ENCODE measurements at regions of chrX and their contacts with region 1.

Region 1: DNA sequence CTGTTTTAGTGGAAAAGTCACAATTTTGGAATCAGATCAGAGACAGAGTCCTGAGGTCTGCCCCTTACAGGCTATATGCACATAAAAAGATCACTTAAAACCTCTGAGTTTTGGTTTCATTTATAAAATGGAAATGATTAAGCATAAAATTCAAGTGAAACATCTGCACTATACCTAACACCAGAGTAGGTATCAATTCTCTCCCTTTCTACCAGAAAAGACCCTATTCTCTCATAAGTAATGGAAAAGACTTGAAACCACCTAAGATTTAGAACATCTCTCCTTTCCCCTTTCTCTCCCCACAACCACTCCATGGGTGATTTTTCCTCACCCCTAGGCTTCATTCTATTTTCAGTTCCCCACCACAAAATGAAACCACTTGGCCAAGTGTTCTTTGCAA is 907 bp downstream of the LHFPL1 start:
- DNase-seq: peak in 1 of 9 experiments; percentile 14
- ATAC-seq: peak; percentile 27
- H3K4me3 ChIP-seq: no peak overlapping the region
- H3K4me3 Mint-ChIP-seq: peak overlapping the region; percentile 85
- H3K27ac ChIP-seq: peak overlapping the region; percentile 47 to 73
- H3K27ac Mint-ChIP-seq: peak overlapping the region; percentile 88
- H3K4me1 ChIP-seq: peaks cover 27% of the 10 kb centered on the region
- H3K4me1 Mint-ChIP-seq: peaks cover 38% of the 10 kb centered on the region
- H3K27me3 ChIP-seq: no peaks in the 10 kb centered on the region
- H3K27me3 Mint-ChIP-seq: no peaks in the 10 kb centered on the region
- CTCF ChIP-seq: no peak

Region 2: DNA sequence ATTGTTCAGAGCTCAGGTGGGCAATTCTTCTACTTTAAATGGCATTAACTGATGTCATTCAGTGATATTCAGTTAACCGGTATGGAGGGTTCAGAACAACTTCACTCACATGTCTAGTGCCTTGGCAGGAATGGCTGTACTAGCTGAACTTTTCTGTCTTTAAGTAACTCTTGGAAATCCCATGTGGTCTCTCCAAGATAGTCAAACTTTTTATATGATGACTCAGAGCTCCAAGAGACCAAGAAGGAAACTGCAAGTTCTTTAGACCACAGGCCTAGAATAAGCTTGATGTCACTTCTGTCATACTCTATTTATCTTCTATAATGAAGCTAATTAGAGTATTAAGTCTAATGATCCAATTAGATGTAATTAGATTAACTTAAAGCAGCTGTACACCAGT is 24.0 kb before region 1 on chrX:
- CTCF ChIA-PET with region 1: no interaction called
- POLR2A ChIA-PET with region 1: no interaction called
- intact Hi-C with region 1: no loop called
- DNase-seq: no peak
- ATAC-seq: no peak
- H3K4me3 ChIP-seq: no peak overlapping the region
- H3K4me3 Mint-ChIP-seq: no peak overlapping the region
- H3K27ac ChIP-seq: no peak overlapping the region
- H3K27ac Mint-ChIP-seq: no peak overlapping the region
- H3K4me1 ChIP-seq: no peaks in the 10 kb centered on the region
- H3K4me1 Mint-ChIP-seq: no peaks in the 10 kb centered on the region
- H3K27me3 ChIP-seq: no peaks in the 10 kb centered on the region
- H3K27me3 Mint-ChIP-seq: no peaks in the 10 kb centered on the region
- CTCF ChIP-seq: no peak

Region 3: GRCh38 chrX:112841114-112841819 is 162.4 kb after region 1 on chrX:
- CTCF ChIA-PET with region 1: no interaction called
- POLR2A ChIA-PET with region 1: interaction called, 3 read pairs
- intact Hi-C with region 1: loop called (anchors 5 kb)
- DNase-seq: peak; percentile 46 to 89 (median 72)
- ATAC-seq: peak; percentile 96
- H3K4me3 ChIP-seq: peak overlapping the region; percentile 76 to 86
- H3K4me3 Mint-ChIP-seq: peak overlapping the region; percentile 87
- H3K27ac ChIP-seq: peak overlapping the region; percentile 42 to 58
- H3K27ac Mint-ChIP-seq: peak overlapping the region; percentile 86
- H3K4me1 ChIP-seq: peaks cover 5% of the 10 kb centered on the region
- H3K4me1 Mint-ChIP-seq: peaks cover 15% of the 10 kb centered on the region
- H3K27me3 ChIP-seq: no peaks in the 10 kb centered on the region
- H3K27me3 Mint-ChIP-seq: no peaks in the 10 kb centered on the region
- CTCF ChIP-seq: no peak

Measured in CD8-positive, alpha-beta T cell (primary cell).